CD4-positive, alpha-beta memory T cell (primary cell): ENCODE measurements at regions of chr7 and their contacts with region 1.

Region 1: DNA sequence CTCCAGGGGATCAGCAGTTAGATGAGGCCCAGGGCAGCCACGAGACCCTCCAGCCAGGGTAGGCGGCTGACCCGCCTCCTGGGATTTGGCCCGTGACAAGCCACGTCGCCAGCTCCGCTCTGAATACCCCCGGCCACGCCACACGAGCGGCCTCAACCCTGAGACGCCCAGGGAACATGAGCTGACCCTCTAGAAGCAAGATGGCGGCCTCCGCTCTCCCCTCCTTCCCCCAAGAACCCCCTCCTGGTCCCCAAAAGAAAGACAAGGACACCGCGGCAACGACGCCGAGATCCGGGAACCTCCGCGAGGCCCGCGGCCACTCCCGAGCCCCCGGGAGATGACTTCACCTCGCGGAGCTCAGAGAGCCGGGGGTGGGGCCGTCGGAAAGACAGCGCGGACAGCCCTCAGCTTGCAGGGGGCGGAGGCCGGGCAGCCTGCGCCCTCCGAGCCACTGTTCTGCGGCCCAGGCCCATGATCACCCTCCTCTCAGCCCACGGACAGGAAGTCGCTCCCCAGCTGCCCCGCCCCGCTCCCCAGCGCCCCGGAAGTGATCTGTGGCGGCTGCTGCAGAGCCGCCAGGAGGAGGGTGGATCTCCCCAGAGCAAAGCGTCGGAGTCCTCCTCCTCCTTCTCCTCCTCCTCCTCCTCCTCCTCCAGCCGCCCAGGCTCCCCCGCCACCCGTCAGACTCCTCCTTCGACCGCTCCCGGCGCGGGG is at the start of gene RALA:
- DNase-seq: peak; percentile 85 to 92 (median 87)
- H3K4me3 ChIP-seq: peak within 1 kb of the TSS; percentile 66 to 78
- H3K4me3 Mint-ChIP-seq: peak within 1 kb of the TSS; percentile 90 to 99 (median 97)
- H3K27ac ChIP-seq: peak within 1 kb of the TSS; percentile 79
- H3K27ac Mint-ChIP-seq: peak within 1 kb of the TSS; percentile 90 to 98 (median 95)
- H3K4me1 ChIP-seq: peaks cover 52% of the 10 kb centered on the region
- H3K4me1 Mint-ChIP-seq: peaks cover 36 to 63% (median 45%) of the 10 kb centered on the region in 4 donors
- H3K27me3 ChIP-seq: no peaks in the 10 kb centered on the region
- H3K27me3 Mint-ChIP-seq: no peaks in the 10 kb centered on the region
- total RNA-seq, gene RALA: 46.3 to 47.7 TPM

Region 2: GRCh38 chr7:39054731-39055130 is 568.4 kb before region 1 on chr7:
- CTCF ChIA-PET with region 1: no interaction called
- POLR2A ChIA-PET with region 1: no interaction called
- intact Hi-C with region 1: no loop called
- DNase-seq: no peak
- H3K4me3 ChIP-seq: no peak overlapping the region
- H3K4me3 Mint-ChIP-seq: no peak overlapping the region
- H3K27ac ChIP-seq: no peak overlapping the region
- H3K27ac Mint-ChIP-seq: no peak overlapping the region
- H3K4me1 ChIP-seq: no peaks in the 10 kb centered on the region
- H3K4me1 Mint-ChIP-seq: no peaks in the 10 kb centered on the region
- H3K27me3 ChIP-seq: no peaks in the 10 kb centered on the region
- H3K27me3 Mint-ChIP-seq: peaks cover 0 to 2% of the 10 kb centered on the region in 2 donors

Region 3: DNA sequence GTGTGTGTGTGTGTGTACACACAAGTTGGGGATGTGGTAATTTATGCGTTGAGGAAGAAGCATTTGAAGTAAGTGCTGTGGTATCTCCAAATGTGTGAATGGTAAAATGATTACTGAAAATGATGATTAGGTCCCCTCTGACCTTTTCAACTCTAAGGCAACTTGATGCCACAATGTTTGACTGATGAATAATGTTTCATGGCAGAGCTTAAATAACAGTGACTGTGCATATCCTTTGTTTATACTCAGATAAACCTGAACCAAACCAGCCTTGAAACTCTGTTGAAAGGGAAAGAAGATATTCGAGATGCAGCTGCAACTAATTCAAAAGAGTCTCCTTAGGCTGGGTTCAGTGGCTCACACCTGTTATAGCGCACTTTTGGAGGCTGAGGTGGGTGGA is 121.8 kb before region 1 on chr7:
- CTCF ChIA-PET with region 1: no interaction called
- POLR2A ChIA-PET with region 1: no interaction called
- intact Hi-C with region 1: no loop called
- DNase-seq: no peak
- H3K4me3 ChIP-seq: no peak overlapping the region
- H3K4me3 Mint-ChIP-seq: no peak overlapping the region
- H3K27ac ChIP-seq: no peak overlapping the region
- H3K27ac Mint-ChIP-seq: no peak overlapping the region
- H3K4me1 ChIP-seq: no peaks in the 10 kb centered on the region
- H3K4me1 Mint-ChIP-seq: peaks cover 0 to 2% (median under 1%) of the 10 kb centered on the region in 4 donors
- H3K27me3 ChIP-seq: no peaks in the 10 kb centered on the region
- H3K27me3 Mint-ChIP-seq: peaks cover 12 to 20% of the 10 kb centered on the region in 2 donors

Region 4: GRCh38 chr7:39589323-39590111 is 33.7 kb before region 1 on chr7:
- CTCF ChIA-PET with region 1: interaction called, 9 read pairs
- POLR2A ChIA-PET with region 1: interaction called, 18 read pairs
- intact Hi-C with region 1: loop called (anchors 2 kb)
- DNase-seq: peak; percentile 62 to 94 (median 68)
- H3K4me3 ChIP-seq: no peak overlapping the region
- H3K4me3 Mint-ChIP-seq: peak overlapping the region in 7 of 8 donors; percentile 19 to 73 (median 52)
- H3K27ac ChIP-seq: no peak overlapping the region
- H3K27ac Mint-ChIP-seq: peak overlapping the region; percentile 63 to 92 (median 78)
- H3K4me1 ChIP-seq: peaks cover 34% of the 10 kb centered on the region
- H3K4me1 Mint-ChIP-seq: peaks cover 15 to 47% (median 18%) of the 10 kb centered on the region in 4 donors
- H3K27me3 ChIP-seq: no peaks in the 10 kb centered on the region
- H3K27me3 Mint-ChIP-seq: no peaks in the 10 kb centered on the region

Region 5: DNA sequence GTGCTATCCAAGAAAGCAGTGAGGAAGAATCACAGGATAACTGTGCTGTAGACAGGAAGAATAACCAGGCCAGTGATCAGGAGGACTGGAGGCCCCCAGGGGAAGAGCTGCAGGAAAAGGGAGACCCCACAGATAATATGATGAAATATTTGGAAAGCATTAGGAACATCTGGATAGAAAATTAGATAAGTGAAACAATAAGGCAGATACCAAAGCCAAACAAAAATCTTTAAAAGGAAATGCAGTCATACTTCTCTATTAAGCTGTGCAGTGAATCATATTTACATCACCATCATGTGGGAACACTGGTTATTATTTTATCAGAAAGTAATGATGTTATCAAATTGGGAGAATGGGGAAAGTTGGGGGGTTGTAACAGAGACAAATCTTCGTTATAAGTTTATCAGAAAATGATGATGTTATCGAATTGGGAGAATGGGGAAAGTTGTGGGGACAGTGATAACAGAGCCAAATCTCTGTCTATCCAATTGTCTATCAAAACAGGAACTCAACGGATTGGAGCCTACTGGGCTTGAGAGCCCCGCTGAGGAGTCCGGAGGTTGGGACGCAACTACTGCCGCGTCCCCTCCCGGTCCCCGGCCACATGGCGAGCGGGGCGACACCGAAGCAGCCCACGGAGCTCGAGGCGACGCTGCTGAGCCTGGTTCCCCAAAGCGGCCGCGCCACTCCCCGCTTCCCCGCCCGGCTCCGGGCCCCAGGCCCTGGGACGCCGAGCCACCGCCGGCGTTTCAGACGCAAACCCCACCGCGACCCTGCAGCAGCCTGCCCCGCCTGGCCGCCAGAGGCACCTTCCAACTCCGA is 13.9 kb before region 1 on chr7:
- CTCF ChIA-PET with region 1: interaction called, 6 read pairs
- POLR2A ChIA-PET with region 1: interaction called, 13 read pairs
- intact Hi-C with region 1: loop called (anchors 2 kb)
- DNase-seq: no peak
- H3K4me3 ChIP-seq: no peak overlapping the region
- H3K4me3 Mint-ChIP-seq: peak overlapping the region; percentile 36 to 71 (median 61)
- H3K27ac ChIP-seq: no peak overlapping the region
- H3K27ac Mint-ChIP-seq: peak overlapping the region in 6 of 7 donors; percentile 11 to 77 (median 34)
- H3K4me1 ChIP-seq: peaks cover 44% of the 10 kb centered on the region
- H3K4me1 Mint-ChIP-seq: peaks cover 26 to 51% (median 35%) of the 10 kb centered on the region in 4 donors
- H3K27me3 ChIP-seq: no peaks in the 10 kb centered on the region
- H3K27me3 Mint-ChIP-seq: peaks cover 16 to 25% of the 10 kb centered on the region in 2 donors

Region 6: GRCh38 chr7:39633563-39634477 is 10.6 kb after region 1 on chr7:
- CTCF ChIA-PET with region 1: interaction called, 3 read pairs
- POLR2A ChIA-PET with region 1: interaction called, 26 read pairs
- intact Hi-C with region 1: loop called (anchors 1 kb)
- DNase-seq: peak; percentile 43 to 73 (median 58)
- H3K4me3 ChIP-seq: peak overlapping the region in 1 of 2 donors; percentile 8
- H3K4me3 Mint-ChIP-seq: peak overlapping the region; percentile 56 to 85 (median 76)
- H3K27ac ChIP-seq: peak overlapping the region; percentile 52
- H3K27ac Mint-ChIP-seq: peak overlapping the region; percentile 90 to 99 (median 96)
- H3K4me1 ChIP-seq: peaks cover 56% of the 10 kb centered on the region
- H3K4me1 Mint-ChIP-seq: peaks cover 57 to 77% (median 66%) of the 10 kb centered on the region in 4 donors
- H3K27me3 ChIP-seq: no peaks in the 10 kb centered on the region
- H3K27me3 Mint-ChIP-seq: no peaks in the 10 kb centered on the region

Region 7: DNA sequence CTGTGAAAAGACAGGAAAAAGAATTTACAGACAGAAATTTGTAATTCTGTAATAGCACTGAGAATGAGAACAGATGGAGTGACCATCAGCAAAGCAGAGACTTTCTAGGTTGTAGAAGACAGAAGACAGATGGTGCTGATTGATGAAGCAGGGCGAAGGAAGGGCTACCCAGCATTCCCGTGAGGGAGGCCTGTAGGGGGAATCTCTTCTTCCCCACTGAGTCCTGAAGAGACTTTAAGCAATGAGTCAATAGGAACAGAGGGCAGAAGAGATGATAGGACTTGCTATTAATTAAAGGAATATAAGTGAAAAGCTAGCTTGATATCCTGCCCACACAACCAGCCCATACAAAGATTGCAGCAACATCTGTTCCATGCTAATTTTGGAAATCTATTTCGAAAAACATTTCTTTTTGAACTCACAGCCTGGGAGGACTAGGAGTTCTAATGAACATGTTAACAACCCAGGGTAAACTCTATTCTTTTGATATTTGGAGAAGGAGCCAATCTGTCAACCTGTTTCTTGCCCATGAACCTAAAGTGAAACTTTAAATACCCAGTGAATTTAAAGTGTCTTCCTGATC is 44.3 kb after region 1 on chr7:
- CTCF ChIA-PET with region 1: no interaction called
- POLR2A ChIA-PET with region 1: no interaction called
- intact Hi-C with region 1: no loop called
- DNase-seq: no peak
- H3K4me3 ChIP-seq: no peak overlapping the region
- H3K4me3 Mint-ChIP-seq: no peak overlapping the region
- H3K27ac ChIP-seq: no peak overlapping the region
- H3K27ac Mint-ChIP-seq: peak overlapping the region in 4 of 7 donors; percentile 14 to 65 (median 30)
- H3K4me1 ChIP-seq: no peaks in the 10 kb centered on the region
- H3K4me1 Mint-ChIP-seq: peaks cover 23 to 43% (median 27%) of the 10 kb centered on the region in 4 donors
- H3K27me3 ChIP-seq: no peaks in the 10 kb centered on the region
- H3K27me3 Mint-ChIP-seq: no peaks in the 10 kb centered on the region

Region 8: GRCh38 chr7:39732837-39733804 is 109.9 kb after region 1 on chr7:
- CTCF ChIA-PET with region 1: interaction called, 3 read pairs
- POLR2A ChIA-PET with region 1: interaction called, 43 read pairs
- intact Hi-C with region 1: loop called (anchors 2 kb)
- DNase-seq: peak; percentile 87 to 97 (median 94)
- H3K4me3 ChIP-seq: peak overlapping the region; percentile 37 to 84
- H3K4me3 Mint-ChIP-seq: peak overlapping the region; percentile 90 to 100 (median 96)
- H3K27ac ChIP-seq: peak overlapping the region; percentile 88
- H3K27ac Mint-ChIP-seq: peak overlapping the region; percentile 94 to 100 (median 97)
- H3K4me1 ChIP-seq: peaks cover 41% of the 10 kb centered on the region
- H3K4me1 Mint-ChIP-seq: peaks cover 23 to 56% (median 39%) of the 10 kb centered on the region in 4 donors
- H3K27me3 ChIP-seq: no peaks in the 10 kb centered on the region
- H3K27me3 Mint-ChIP-seq: peaks cover 0 to 1% of the 10 kb centered on the region in 2 donors

Region 9: GRCh38 chr7:39746103-39746819 is 123.1 kb after region 1 on chr7:
- CTCF ChIA-PET with region 1: interaction called, 17 read pairs
- POLR2A ChIA-PET with region 1: no interaction called
- intact Hi-C with region 1: loop called (anchors 1 kb)
- DNase-seq: peak; percentile 42 to 55 (median 52)
- H3K4me3 ChIP-seq: no peak overlapping the region
- H3K4me3 Mint-ChIP-seq: peak overlapping the region in 2 of 8 donors; percentile 15 to 20
- H3K27ac ChIP-seq: no peak overlapping the region
- H3K27ac Mint-ChIP-seq: peak overlapping the region in 4 of 7 donors; percentile 20 to 81 (median 54)
- H3K4me1 ChIP-seq: peaks cover 3% of the 10 kb centered on the region
- H3K4me1 Mint-ChIP-seq: peaks cover 5 to 6% (median 5%) of the 10 kb centered on the region in 4 donors
- H3K27me3 ChIP-seq: no peaks in the 10 kb centered on the region
- H3K27me3 Mint-ChIP-seq: no peaks in the 10 kb centered on the region